ENCODE measurements at regions of chr16 and their contacts with region 1.

Region 1: GRCh38 chr16:21599233-21600030 is at the start of gene METTL9:
- DNase-seq: peak; percentile 85 to 95 (median 94)
- H3K4me3 ChIP-seq: peak within 1 kb of the TSS; percentile 64 to 95 (median 87)
- H3K27ac ChIP-seq: peak within 1 kb of the TSS; percentile 49 to 97 (median 93)
- H3K27me3 ChIP-seq: no peaks in the 10 kb centered on the region
- CTCF ChIP-seq: peak in 42 of 56 donors; percentile 2 to 65 (median 36)
- total RNA-seq, gene METTL9: 52.4 to 107 (median 80.4) TPM

Region 2: GRCh38 chr16:21523411-21524067 is 75.9 kb before region 1 on chr16:
- intact Hi-C with region 1: loop called in 1 of 2 experiments (anchors 10 kb)
- DNase-seq: peak in 9 of 10 donors; percentile 43 to 90 (median 84)
- H3K4me3 ChIP-seq: peak overlapping the region in 1 of 59 donors; percentile 2
- H3K27ac ChIP-seq: peak overlapping the region in 54 of 59 donors; percentile 2 to 77 (median 38)
- H3K27me3 ChIP-seq: no peaks in the 10 kb centered on the region
- CTCF ChIP-seq: no peak

Region 3: GRCh38 chr16:21642861-21643260 is 43.4 kb after region 1 on chr16:
- intact Hi-C with region 1: loop called in 1 of 2 experiments (anchors 5 kb)
- DNase-seq: no peak
- H3K4me3 ChIP-seq: no peak overlapping the region
- H3K27ac ChIP-seq: peak overlapping the region in 30 of 59 donors; percentile 0 to 79 (median 36)
- H3K27me3 ChIP-seq: no peaks in the 10 kb centered on the region
- CTCF ChIP-seq: no peak